Caco-2 (cell line): ENCODE measurements at regions of chr20 and their contacts with region 1.

Region 1: GRCh38 chr20:59515014-59515905 is 89.1 kb upstream of the PHACTR3 start:
- DNase-seq: peak; percentile 93 to 94
- H3K4me3 ChIP-seq: no peak overlapping the region
- H3K4me3 Mint-ChIP-seq: no peak overlapping the region
- H3K27ac Mint-ChIP-seq: no peak overlapping the region
- H3K4me1 ChIP-seq: no peaks in the 10 kb centered on the region
- H3K4me1 Mint-ChIP-seq: no peaks in the 10 kb centered on the region
- H3K27me3 ChIP-seq: peaks cover 2% of the 10 kb centered on the region; the same call in 1 of the 2 replicates
- H3K27me3 Mint-ChIP-seq: peaks cover 48% of the 10 kb centered on the region
- CTCF ChIP-seq: peak; percentile 99 to 100

Region 2: GRCh38 chr20:59485576-59486454 is 29.4 kb before region 1 on chr20:
- CTCF ChIA-PET with region 1: no interaction called
- POLR2A ChIA-PET with region 1: no interaction called
- intact Hi-C with region 1: no loop called
- DNase-seq: peak in 1 of 2 experiments; percentile 30
- H3K4me3 ChIP-seq: no peak overlapping the region
- H3K4me3 Mint-ChIP-seq: no peak overlapping the region
- H3K27ac Mint-ChIP-seq: no peak overlapping the region
- H3K4me1 ChIP-seq: no peaks in the 10 kb centered on the region
- H3K4me1 Mint-ChIP-seq: no peaks in the 10 kb centered on the region
- H3K27me3 ChIP-seq: 0 out of 2 replicates have a peak, but pooled peaks cover 2% of the 10 kb centered on the region
- H3K27me3 Mint-ChIP-seq: peaks cover 19% of the 10 kb centered on the region
- CTCF ChIP-seq: no peak

Region 3: DNA sequence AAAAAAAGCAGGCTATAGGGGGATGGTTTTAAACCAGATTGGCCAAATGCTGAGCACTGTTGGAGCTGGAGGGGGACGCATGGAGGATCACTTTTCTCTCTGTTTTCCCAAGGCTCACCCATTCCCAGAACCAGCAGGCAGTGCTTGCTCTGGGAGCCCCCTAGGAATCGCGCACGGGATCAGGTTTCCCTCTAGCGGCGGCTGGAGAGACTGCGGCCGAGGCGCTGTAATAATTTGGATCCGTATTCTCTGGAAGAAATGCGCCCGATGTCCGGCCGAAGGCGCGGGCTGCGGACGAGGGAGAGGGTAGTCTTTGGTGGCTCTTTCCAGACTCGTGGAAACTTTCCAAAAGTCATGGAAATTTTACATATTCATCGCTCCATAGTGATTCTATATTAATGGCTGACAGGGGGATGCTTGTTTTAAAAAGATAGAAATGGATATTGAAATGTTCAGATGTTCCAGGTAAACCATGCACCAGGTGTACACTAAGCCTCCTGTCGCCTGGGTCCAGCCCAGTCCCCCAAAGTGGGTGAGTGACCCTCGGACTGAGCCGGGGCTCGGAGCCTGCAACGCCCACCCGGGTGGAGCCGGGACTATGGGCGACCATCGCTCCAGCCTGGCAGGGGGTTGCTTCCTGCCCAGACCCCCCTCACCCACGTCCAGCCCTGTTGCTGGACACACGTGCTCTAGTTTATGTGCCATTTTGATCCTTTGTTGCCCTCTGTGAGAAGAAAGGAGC is 10.4 kb after region 1 on chr20:
- CTCF ChIA-PET with region 1: interaction called, 9 read pairs
- POLR2A ChIA-PET with region 1: no interaction called
- intact Hi-C with region 1: loop called (anchors 1 kb)
- DNase-seq: peak; percentile 86 to 91
- H3K4me3 ChIP-seq: no peak overlapping the region
- H3K4me3 Mint-ChIP-seq: no peak overlapping the region
- H3K27ac Mint-ChIP-seq: no peak overlapping the region
- H3K4me1 ChIP-seq: peaks cover 4% of the 10 kb centered on the region; the same call in 1 of the 2 replicates
- H3K4me1 Mint-ChIP-seq: no peaks in the 10 kb centered on the region
- H3K27me3 ChIP-seq: peaks cover 1% of the 10 kb centered on the region; the same call in 1 of the 2 replicates
- H3K27me3 Mint-ChIP-seq: peaks cover 65% of the 10 kb centered on the region
- CTCF ChIP-seq: peak; percentile 99 to 100

Region 4: DNA sequence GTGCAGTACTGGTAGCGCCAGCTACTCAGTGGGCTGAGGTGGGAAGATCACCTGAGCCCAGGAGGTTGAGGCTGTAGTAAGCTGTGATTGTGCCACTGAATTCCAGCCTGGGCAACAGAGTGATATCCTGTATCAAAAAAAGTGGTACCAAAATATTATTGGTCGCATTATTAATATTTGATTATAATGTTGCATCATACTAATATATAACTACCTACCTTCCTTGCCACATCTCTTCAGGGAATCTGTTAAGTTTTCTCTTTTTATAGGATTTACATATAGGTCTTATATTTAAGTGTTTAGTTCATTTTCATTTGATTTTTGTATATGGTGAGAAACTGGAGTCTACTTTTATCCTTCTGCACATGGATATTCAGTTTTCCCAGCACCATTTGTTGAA is 22.7 kb after region 1 on chr20:
- CTCF ChIA-PET with region 1: no interaction called
- POLR2A ChIA-PET with region 1: no interaction called
- intact Hi-C with region 1: no loop called
- DNase-seq: no peak
- H3K4me3 ChIP-seq: no peak overlapping the region
- H3K4me3 Mint-ChIP-seq: no peak overlapping the region
- H3K27ac Mint-ChIP-seq: no peak overlapping the region
- H3K4me1 ChIP-seq: no peaks in the 10 kb centered on the region
- H3K4me1 Mint-ChIP-seq: no peaks in the 10 kb centered on the region
- H3K27me3 ChIP-seq: no peaks in the 10 kb centered on the region
- H3K27me3 Mint-ChIP-seq: peaks cover 13% of the 10 kb centered on the region
- CTCF ChIP-seq: no peak

Region 5: GRCh38 chr20:59850018-59850641 is 334.9 kb after region 1 on chr20:
- CTCF ChIA-PET with region 1: no interaction called
- POLR2A ChIA-PET with region 1: no interaction called
- intact Hi-C with region 1: no loop called
- DNase-seq: peak in 1 of 2 experiments; percentile 59
- H3K4me3 ChIP-seq: no peak overlapping the region
- H3K4me3 Mint-ChIP-seq: no peak overlapping the region
- H3K27ac Mint-ChIP-seq: no peak overlapping the region
- H3K4me1 ChIP-seq: peaks cover 12% of the 10 kb centered on the region
- H3K4me1 Mint-ChIP-seq: peaks cover 13% of the 10 kb centered on the region
- H3K27me3 ChIP-seq: no peaks in the 10 kb centered on the region
- H3K27me3 Mint-ChIP-seq: no peaks in the 10 kb centered on the region
- CTCF ChIP-seq: peak; percentile 62 to 84